Naive thymus-derived CD4-positive, alpha-beta T cell (primary cell): ENCODE measurements at regions of chr18 and their contacts with region 1.

Region 1: GRCh38 chr18:63422087-63422809 is at the start of gene VPS4B:
- DNase-seq: peak; percentile 99 to 100 (median 99)
- ATAC-seq: peak; percentile 97
- H3K4me3 ChIP-seq: peak within 1 kb of the TSS; percentile 96
- H3K4me3 Mint-ChIP-seq: peak within 1 kb of the TSS; percentile 88 to 100 (median 97)
- H3K27ac ChIP-seq: peak within 1 kb of the TSS; percentile 95
- H3K27ac Mint-ChIP-seq: peak within 1 kb of the TSS; percentile 94 to 100 (median 98)
- H3K4me1 ChIP-seq: peaks cover 17 to 22% of the 10 kb centered on the region in 2 donors
- H3K4me1 Mint-ChIP-seq: peaks cover 6 to 34% (median 26%) of the 10 kb centered on the region in 7 donors
- H3K27me3 ChIP-seq: no peaks in the 10 kb centered on the region
- H3K27me3 Mint-ChIP-seq: peaks cover 0 to 5% (median 2%) of the 10 kb centered on the region in 5 donors
- total RNA-seq, gene VPS4B: 48.2 to 84.6 (median 74.9) TPM

Region 2: GRCh38 chr18:62522504-62523254 is 899.6 kb before region 1 on chr18 and contains the start of gene ZCCHC2:
- CTCF ChIA-PET with region 1: no interaction called
- POLR2A ChIA-PET with region 1: interaction called, 5 read pairs
- intact Hi-C with region 1: loop called (anchors 1 kb)
- DNase-seq: peak; percentile 96 to 100 (median 99)
- ATAC-seq: peak; percentile 88
- H3K4me3 ChIP-seq: peak within 1 kb of the TSS; percentile 81
- H3K4me3 Mint-ChIP-seq: peak within 1 kb of the TSS; percentile 91 to 98 (median 96)
- H3K27ac ChIP-seq: peak within 1 kb of the TSS; percentile 88
- H3K27ac Mint-ChIP-seq: peak within 1 kb of the TSS; percentile 62 to 97 (median 93)
- H3K4me1 ChIP-seq: peaks cover 23 to 26% of the 10 kb centered on the region in 2 donors
- H3K4me1 Mint-ChIP-seq: peaks cover 21 to 44% (median 37%) of the 10 kb centered on the region in 7 donors
- H3K27me3 ChIP-seq: no peaks in the 10 kb centered on the region
- H3K27me3 Mint-ChIP-seq: no peaks in the 10 kb centered on the region
- total RNA-seq, gene ZCCHC2: 51.1 to 68.5 (median 63.1) TPM

Region 3: DNA sequence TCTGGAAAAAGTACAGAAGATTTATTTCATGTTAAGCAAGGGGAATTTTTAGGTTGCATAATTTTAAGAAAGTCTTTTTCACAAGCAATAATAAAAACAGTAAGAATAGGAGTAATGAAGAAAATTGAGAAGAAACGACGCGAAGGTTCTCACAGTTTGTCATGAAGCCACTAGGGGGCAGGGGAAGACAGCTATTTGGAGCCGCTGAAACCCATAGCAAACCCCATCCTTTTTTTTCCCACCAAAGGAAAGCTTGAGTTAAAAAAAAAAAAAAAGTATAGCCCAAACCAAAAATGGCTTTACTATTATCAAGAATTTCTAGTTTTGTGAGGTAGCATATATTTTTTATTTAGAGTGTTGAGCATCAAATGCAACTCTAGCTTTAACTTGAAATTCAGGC is 406.0 kb before region 1 on chr18:
- CTCF ChIA-PET with region 1: interaction called, 4 read pairs
- POLR2A ChIA-PET with region 1: no interaction called
- intact Hi-C with region 1: loop called in 1 of 2 experiments (anchors 5 kb)
- DNase-seq: peak in 7 of 9 donors; percentile 34 to 65 (median 56)
- ATAC-seq: peak; percentile 77
- H3K4me3 ChIP-seq: no peak overlapping the region
- H3K4me3 Mint-ChIP-seq: no peak overlapping the region
- H3K27ac ChIP-seq: no peak overlapping the region
- H3K27ac Mint-ChIP-seq: no peak overlapping the region
- H3K4me1 ChIP-seq: no peaks in the 10 kb centered on the region
- H3K4me1 Mint-ChIP-seq: peaks cover 0 to 2% (median 0%) of the 10 kb centered on the region in 7 donors
- H3K27me3 ChIP-seq: no peaks in the 10 kb centered on the region
- H3K27me3 Mint-ChIP-seq: peaks cover 7 to 61% (median 13%) of the 10 kb centered on the region in 5 donors

Region 4: GRCh38 chr18:63161761-63162195 is 260.5 kb before region 1 on chr18:
- CTCF ChIA-PET with region 1: no interaction called
- POLR2A ChIA-PET with region 1: interaction called, 3 read pairs
- intact Hi-C with region 1: loop called (anchors 1 kb)
- DNase-seq: peak; percentile 39 to 94 (median 75)
- ATAC-seq: peak; percentile 90
- H3K4me3 ChIP-seq: peak overlapping the region; percentile 40
- H3K4me3 Mint-ChIP-seq: peak overlapping the region; percentile 74 to 99 (median 86)
- H3K27ac ChIP-seq: peak overlapping the region; percentile 90
- H3K27ac Mint-ChIP-seq: peak overlapping the region; percentile 93 to 99 (median 95)
- H3K4me1 ChIP-seq: peaks cover 63 to 69% of the 10 kb centered on the region in 2 donors
- H3K4me1 Mint-ChIP-seq: peaks cover 70 to 98% (median 94%) of the 10 kb centered on the region in 7 donors
- H3K27me3 ChIP-seq: no peaks in the 10 kb centered on the region
- H3K27me3 Mint-ChIP-seq: no peaks in the 10 kb centered on the region

Region 5: DNA sequence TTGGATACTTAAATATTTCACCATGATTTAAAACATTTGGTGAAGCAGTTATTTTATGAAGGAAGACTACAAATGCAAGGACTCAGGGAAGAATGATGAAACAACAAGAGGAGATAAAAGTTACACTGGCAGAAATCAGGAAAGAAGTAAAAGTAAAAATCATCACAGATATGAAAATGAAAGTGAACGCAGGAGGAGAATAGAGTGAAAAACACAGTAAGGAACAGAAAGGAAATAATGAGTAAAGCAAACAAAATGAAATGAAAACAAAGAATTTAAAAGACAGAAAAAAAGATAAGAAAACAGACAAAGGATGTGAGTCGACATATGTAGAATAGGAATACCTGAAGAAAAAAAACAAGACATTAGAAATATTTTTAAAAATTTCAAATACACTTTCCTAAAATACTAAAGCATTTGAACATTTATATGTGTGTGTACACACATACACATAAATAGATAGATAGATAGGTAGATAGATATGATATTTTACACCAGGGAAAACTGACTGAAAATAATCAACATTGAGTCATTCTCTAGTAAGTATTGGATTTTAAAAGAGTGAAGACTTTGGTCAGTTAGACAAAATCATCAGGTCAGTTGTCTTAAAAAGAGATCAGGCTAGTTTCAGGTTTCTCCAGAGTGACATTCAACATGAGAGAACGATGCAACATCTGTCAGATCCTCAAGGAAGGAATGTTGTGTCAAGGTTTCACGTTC is 43.2 kb before region 1 on chr18:
- CTCF ChIA-PET with region 1: no interaction called
- POLR2A ChIA-PET with region 1: interaction called, 3 read pairs
- intact Hi-C with region 1: loop called in 1 of 2 experiments (anchors 1 kb)
- DNase-seq: no peak
- ATAC-seq: no peak
- H3K4me3 ChIP-seq: no peak overlapping the region
- H3K4me3 Mint-ChIP-seq: peak overlapping the region in 9 of 10 donors; percentile 2 to 65 (median 19)
- H3K27ac ChIP-seq: no peak overlapping the region
- H3K27ac Mint-ChIP-seq: peak overlapping the region; percentile 5 to 85 (median 61)
- H3K4me1 ChIP-seq: peaks cover 0 to 7% of the 10 kb centered on the region in 2 donors
- H3K4me1 Mint-ChIP-seq: peaks cover 14 to 29% (median 19%) of the 10 kb centered on the region in 7 donors
- H3K27me3 ChIP-seq: no peaks in the 10 kb centered on the region
- H3K27me3 Mint-ChIP-seq: no peaks in the 10 kb centered on the region

Region 6: DNA sequence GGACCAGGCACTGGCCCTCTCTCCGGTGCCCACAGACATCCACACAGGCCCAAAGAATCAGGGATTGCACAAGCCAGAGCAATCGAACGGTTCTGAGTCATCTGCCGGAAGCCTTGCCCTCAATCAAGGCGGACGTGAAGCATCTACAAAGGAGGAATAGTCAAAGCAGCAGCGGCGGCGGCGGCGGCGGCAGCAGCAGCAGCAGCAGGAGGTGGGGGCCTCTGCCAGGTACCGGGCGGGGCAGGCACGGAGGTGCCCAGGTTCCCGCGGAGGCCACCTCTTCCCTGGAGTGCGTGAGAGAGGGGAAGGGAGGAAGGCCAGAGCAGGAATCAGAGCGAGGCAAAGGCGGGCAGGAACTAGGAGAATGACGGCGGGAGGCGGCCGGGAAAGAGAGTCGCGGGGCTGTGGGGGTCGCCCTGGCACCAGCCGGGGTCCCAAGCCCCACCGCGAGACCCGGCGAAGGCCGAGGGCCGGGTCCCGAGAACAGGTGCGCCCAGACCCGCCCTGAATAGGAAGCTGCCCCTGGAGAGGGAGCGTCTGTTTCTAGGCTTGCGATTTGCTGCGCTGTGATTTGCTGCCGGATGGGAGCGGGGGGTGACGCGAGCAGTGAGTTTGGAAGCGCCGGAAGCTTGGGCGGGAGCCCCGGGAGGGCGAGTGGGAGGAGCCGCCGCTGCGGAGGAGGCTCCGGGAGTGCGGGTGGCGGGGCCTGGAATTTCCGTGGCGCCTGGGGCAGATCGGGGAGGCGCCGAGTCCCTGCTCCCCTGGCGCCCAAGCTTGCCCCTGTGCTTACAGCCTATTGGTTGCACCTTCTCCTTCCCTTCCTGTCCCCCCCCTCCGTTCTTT is 547.9 kb after region 1 on chr18 and contains the start of gene SERPINB8:
- CTCF ChIA-PET with region 1: no interaction called
- POLR2A ChIA-PET with region 1: interaction called, 6 read pairs
- intact Hi-C with region 1: loop called (anchors 1 to 2 kb)
- DNase-seq: peak; percentile 44 to 84 (median 77)
- ATAC-seq: peak; percentile 89
- H3K4me3 ChIP-seq: peak within 1 kb of the TSS; percentile 93
- H3K4me3 Mint-ChIP-seq: peak within 1 kb of the TSS; percentile 88 to 98 (median 94)
- H3K27ac ChIP-seq: peak within 1 kb of the TSS; percentile 96
- H3K27ac Mint-ChIP-seq: peak within 1 kb of the TSS; percentile 92 to 97 (median 94)
- H3K4me1 ChIP-seq: peaks cover 13% of the 10 kb centered on the region in 2 donors
- H3K4me1 Mint-ChIP-seq: peaks cover 26 to 42% (median 31%) of the 10 kb centered on the region in 7 donors
- H3K27me3 ChIP-seq: no peaks in the 10 kb centered on the region
- H3K27me3 Mint-ChIP-seq: peaks cover 0 to 25% (median 1%) of the 10 kb centered on the region in 5 donors
- total RNA-seq, gene SERPINB8: 9.2 to 15.7 (median 10.0) TPM